ENCODE measurements at regions of chr5 and their contacts with region 1.

Region 1: DNA sequence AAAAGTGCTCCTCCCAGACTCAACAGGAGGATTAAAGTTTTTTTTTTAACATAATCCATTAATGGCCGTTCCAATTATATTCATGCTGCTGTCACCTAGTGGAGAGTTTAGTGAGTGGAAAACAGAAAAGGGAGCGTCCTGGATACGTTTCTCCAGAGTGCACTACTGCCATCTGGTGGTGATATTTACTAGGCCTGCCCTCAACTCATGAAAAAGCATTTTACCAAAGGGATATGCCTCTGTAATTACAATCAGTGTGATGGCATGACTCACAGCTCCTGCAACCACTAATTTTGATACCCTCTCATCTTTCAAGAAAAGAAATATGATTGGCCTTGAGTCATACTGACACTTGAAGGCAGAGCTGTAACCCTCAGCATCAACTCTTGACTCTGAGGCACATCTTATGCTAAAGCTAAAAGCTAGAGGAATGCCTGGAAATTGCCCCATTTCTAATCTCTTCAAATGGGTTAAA is 20.0 kb downstream of the MINAR2 start:
- DNase-seq: no peak

Region 2: GRCh38 chr5:128905571-128906110 is 862.3 kb before region 1 on chr5:
- intact Hi-C with region 1: loop called in 1 of 2 experiments (anchors 5 kb)
- DNase-seq: no peak

Region 3: GRCh38 chr5:129781594-129781993 is 13.7 kb after region 1 on chr5:
- intact Hi-C with region 1: no loop called
- DNase-seq: no peak

Region 4: DNA sequence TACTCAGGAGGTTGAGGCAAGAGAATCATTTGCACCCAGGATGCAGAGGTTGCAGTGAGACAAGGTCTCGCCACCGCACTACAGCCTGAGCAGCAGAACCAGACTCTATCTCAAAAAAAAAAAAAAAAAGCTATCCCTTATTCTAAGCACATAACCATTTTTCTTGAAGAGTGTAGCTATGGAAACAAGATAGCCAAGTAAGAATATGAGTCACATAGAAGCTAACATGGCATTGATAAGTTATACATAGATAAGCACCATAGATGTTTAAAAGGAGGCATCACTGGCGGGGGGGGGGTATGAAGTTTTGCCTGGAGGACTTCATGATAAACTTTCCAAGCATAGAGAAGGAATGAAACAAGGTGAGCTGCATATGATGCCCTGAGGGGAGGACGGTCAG is 162.3 kb after region 1 on chr5:
- intact Hi-C with region 1: no loop called
- DNase-seq: no peak

Region 5: DNA sequence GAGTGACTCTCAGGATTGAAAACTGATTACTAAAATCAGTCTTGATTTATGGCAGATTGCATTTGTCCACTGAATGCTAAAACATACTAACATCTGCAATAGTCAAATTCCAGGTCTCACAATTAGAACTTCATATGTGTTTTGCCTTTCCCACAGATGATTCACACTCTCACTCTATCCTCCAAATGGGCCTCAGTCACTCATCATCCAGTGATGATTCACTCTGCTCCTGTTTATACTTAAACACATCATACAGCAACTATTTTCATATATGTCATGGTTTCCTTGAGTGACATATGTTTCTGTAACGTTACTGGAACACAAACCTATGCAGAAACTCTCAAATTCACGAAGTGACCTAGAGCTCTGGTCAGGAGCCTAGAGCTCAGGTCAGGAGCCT is 884.2 kb after region 1 on chr5:
- intact Hi-C with region 1: loop called in 1 of 2 experiments (anchors 5 kb)
- DNase-seq: no peak

Region 6: GRCh38 chr5:130955041-130955440 is 1187.1 kb after region 1 on chr5:
- intact Hi-C with region 1: no loop called
- DNase-seq: no peak